ENCODE measurements at regions of chr2 and their contacts with region 1.

Region 1: DNA sequence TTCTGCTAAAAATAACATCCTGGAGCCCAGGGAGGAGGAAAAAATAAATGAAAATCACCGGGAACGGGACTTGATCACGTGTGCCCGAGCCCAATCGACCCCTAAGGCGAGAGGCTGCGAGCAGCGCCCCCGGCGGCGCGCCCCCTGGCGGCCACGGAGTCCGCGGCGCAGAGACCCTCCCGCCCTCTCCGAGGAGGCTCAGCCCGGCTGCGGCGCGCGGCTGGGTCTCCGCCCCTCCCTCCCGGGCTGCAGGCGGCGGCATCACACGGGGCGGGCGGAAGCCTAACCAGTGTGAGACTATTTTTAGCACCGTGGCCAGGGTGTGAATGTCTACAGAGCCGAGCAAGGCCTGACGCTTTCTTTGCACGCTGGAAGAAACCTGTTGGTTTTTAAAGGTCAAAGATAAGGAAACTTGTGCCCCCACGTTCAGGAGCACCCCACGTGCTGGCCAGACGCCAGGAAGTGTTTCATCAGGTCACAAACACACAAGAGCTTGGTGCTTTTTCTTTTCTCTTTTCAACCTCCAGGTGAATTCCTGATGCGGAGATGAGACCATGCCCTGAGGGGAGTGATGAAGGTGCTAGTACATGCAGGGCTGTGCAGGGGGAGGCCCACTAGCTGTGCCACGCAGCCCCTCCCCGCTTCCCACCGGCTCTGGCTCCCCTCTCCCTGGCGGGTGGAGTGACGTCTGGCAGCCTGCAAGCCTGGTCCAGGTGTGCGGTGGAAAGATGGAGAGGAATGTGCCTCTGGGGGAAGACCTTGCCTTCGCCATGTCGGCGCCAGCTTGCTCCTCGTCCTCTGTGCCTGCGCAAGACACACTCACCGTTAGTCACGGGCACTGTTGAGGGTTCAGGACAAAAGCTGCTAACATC is 35.3 kb upstream of the DNMT3A start:
- DNase-seq: peak; percentile 95
- CTCF ChIP-seq: peak; percentile 89

Region 2: DNA sequence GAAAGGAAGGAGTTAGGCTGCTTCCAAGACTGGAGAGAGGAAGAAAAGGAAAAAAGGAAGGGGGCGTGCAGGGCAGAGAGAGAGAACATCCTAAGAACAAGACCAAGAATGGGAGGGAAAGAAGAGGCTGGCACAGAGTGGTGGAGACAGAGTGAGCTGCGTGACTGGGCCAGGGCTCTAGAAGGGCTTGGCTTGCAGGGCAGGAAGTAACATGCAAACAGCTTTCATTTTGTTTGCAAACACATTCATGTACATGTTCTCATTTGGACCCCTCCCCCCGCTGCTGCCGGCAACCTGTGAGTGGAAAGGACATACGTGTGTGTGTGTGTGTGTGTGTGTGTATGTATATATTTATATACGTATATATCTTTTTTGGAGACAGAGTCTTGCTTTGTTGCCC is 11.5 kb after region 1 on chr2:
- CTCF ChIA-PET with region 1: interaction called, 48 read pairs
- POLR2A ChIA-PET with region 1: no interaction called
- DNase-seq: no peak
- CTCF ChIP-seq: no peak

Region 3: DNA sequence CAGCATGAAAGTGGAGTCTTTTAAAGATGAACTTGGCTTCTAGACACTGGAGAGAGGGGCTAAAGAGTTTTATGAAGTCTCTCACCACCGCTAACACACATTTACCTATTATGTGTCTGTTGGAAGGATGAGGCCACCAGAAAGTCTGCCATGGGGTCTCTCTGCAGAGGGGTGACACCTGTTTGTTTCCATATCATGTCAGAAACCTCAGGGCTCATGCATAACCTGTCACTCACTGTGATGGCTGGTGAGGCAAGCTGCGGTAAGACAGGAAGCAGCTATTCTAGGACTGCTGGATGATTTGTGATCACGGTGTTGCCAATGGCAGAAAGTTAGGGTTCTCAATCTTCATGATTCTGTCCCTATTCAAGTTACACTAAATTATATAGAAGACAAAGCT is 25.5 kb after region 1 on chr2:
- CTCF ChIA-PET with region 1: interaction called, 20 read pairs
- POLR2A ChIA-PET with region 1: interaction called, 6 read pairs
- DNase-seq: peak; percentile 58
- CTCF ChIP-seq: no peak

Region 4: DNA sequence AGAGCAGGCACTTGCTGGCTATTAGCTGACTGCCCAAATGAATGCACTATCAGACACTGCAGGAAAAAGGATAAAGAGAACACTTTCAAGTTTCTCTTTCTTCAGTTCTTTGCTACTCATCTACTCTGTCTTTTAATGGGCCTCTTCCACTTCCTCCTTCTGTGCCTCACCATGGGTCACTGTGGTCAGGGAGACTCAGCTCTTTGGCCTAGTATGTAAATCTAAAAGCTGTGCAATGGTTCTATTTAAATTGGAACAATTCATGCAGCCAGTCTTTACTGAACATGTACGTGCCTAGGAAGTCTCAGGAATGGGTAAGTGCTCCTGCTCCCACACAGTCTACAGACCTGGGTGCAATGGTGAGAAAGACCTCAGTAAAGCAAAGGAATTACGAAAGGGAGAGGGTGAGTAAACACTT is 43.8 kb after region 1 on chr2:
- CTCF ChIA-PET with region 1: interaction called, 28 read pairs
- POLR2A ChIA-PET with region 1: interaction called, 3 read pairs
- DNase-seq: peak; percentile 66
- CTCF ChIP-seq: no peak